Activated naive CD8-positive, alpha-beta T cell treated with anti-CD3 and anti-CD28 coated beads, Interleukin-2, amount 10 ng/mL, durations not matched to agents 7 days and 5 days (primary cell): ENCODE measurements at regions of chr15 and their contacts with region 1.

Region 1: DNA sequence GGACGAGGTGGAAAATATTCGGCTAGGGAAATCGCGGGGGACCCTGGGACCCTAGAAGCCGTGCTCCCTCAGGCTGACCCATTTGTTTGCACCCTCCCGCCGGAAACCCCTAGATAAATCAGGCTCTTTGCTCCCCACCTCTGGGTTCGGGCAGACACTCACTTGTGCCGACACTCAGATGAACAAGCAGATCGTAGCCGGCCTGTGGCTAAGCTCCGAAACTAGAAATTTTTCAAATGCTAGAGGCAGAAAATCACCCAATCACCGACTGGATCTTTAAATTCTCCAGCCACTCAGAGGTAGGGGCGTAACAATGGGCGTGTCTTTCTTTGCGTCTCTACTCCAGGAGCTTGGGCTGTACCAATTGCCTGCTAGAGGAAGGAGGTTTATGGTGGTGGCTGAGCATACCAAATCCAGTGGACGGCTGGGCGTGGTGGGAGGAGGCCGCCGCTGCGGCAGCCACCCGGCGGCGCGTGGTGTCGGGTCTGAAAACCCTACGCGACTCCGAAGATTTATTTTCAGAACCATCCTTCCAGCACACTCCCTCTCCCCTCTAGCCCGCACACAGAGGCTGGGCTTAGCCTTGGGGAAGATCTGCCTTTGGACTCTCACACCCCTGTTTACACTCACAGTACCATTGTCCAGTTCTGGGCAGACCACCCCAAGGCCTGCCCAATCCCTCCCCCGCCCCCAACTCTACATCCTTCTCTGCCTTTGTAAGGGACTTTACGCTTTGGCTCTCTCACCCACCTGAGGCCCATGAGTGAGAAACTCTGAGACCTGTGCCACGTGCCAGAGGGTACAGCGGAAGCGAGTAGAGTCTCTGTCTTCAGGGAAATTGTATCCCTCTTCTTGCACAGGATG is at the start of gene PIF1:
- DNase-seq: peak; percentile 80
- ATAC-seq: peak; percentile 92
- H3K4me3 Mint-ChIP-seq: peak within 1 kb of the TSS; percentile 97
- H3K27ac Mint-ChIP-seq: peak within 1 kb of the TSS; percentile 93
- H3K4me1 Mint-ChIP-seq: peaks cover 29% of the 10 kb centered on the region
- H3K27me3 Mint-ChIP-seq: no peaks in the 10 kb centered on the region
- total RNA-seq, gene PIF1: 45.8 to 49.7 TPM

Region 2: DNA sequence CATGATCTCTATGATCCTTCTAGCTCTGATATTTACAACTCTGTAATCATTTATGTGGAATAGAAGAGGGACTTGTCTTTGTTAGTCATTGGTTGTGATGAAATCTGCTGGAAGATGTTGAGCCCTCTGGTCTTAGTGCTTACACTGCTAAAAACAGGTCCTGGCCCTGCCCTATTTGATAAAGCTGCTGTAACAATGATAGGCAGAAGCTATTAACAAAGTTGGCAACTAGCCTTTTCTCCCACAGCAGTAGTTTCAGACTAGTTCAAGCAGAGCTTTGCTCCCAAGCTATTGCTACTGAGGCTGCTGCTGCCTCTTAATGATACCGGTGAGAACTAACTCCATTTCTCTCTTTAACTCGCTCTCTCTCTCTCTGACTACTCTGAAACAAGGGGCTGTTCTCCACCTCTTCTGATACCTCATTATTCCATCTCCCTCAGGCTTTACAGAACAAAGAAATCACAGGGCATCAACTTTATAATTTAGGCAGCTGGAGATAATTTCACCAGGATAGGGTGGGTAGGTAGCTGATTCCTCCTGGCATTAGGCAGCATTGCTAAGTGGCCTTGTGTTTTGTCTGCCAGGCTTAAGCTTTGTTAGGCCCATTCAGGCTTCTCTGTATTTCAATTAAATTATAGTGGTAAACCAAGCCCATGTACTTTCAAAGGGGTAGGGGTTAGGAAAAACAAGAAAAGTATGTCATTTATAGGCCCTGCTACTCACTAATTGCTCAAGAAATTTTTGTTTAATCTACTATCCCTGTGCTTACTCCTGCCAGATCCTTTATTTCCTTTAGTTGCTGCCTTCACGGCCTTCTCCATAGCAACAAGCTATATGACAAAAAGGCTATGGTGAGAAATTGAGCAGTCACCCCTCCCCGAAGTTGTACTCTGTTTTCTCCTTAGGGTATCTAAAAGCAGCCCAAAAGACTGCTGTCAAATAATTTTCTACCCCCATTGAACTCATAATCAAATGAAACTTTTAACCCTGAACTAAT is 189.9 kb before region 1 on chr15:
- POLR2A ChIA-PET with region 1: no interaction called
- DNase-seq: no peak
- ATAC-seq: no peak
- H3K4me3 Mint-ChIP-seq: peak overlapping the region; percentile 62
- H3K27ac Mint-ChIP-seq: peak overlapping the region; percentile 80
- H3K4me1 Mint-ChIP-seq: peaks cover 59% of the 10 kb centered on the region
- H3K27me3 Mint-ChIP-seq: peaks cover 2% of the 10 kb centered on the region

Region 3: GRCh38 chr15:64651573-64652260 is 173.9 kb before region 1 on chr15:
- POLR2A ChIA-PET with region 1: no interaction called
- DNase-seq: no peak
- ATAC-seq: peak; percentile 92
- H3K4me3 Mint-ChIP-seq: peak overlapping the region; percentile 66
- H3K27ac Mint-ChIP-seq: peak overlapping the region; percentile 74
- H3K4me1 Mint-ChIP-seq: peaks cover 24% of the 10 kb centered on the region
- H3K27me3 Mint-ChIP-seq: no peaks in the 10 kb centered on the region

Region 4: DNA sequence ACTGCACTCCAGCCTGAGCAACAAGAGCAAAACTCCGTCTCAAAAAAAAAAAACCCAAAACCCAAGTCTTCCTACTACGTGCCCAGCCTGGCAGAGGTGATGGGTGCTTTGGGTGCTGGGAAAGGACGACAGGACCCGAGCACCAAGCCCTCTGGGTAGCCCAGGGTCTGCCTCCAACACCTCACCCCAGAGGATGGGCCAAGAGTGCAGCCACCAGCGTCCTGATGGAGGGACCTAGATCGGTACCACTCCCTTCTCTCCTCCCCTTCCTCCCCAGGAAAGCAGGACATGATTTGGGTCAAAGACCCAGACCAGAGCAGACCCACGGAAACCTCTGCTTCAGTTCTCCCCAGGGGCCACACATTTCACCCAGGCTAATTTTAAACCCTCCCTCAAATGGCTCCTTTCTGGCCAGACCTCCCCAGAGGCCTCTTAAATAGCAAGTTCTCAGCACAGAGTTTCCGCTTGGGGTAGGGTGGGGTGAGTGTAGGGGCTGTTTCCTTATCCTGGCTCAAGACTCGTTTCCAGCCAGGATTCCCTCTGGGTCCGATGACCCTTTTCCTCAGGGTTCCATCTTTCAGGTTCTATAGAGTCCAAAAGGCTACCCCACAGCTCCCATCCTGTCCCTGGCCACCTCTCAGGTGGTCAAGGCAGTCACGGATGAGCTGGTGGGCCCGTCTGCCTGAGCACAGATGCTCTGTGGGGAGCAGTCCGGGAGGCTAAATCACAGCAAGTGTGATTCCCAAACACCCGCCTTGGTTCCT is 70.8 kb before region 1 on chr15:
- POLR2A ChIA-PET with region 1: no interaction called
- DNase-seq: no peak
- ATAC-seq: no peak
- H3K4me3 Mint-ChIP-seq: no peak overlapping the region
- H3K27ac Mint-ChIP-seq: no peak overlapping the region
- H3K4me1 Mint-ChIP-seq: no peaks in the 10 kb centered on the region
- H3K27me3 Mint-ChIP-seq: peaks cover 11% of the 10 kb centered on the region

Region 5: DNA sequence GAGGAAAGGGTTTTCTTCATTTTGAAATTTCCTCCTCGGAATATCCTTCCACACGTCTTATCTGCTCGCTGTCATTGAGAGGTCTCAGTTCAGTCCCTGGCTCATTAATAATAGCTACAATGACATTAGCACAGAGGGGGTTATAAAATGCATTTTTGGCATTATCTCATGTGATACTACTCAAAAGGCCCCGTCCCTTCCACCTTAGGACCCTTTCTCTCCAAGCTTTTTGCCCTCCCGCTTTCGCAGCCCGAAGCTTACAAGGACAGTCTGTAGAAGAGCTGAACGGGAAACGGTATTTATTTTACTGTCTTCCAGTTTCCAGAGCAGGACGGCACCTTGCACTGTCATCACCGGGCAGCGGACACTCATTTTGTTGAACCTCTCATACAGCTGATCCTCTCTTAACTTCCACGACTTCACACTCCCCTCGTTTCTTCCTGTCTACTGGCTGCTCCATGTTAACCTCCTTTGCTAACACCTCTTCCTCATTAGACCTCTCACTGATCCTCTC is 10.4 kb after region 1 on chr15:
- POLR2A ChIA-PET with region 1: interaction called, 52 read pairs
- DNase-seq: no peak
- ATAC-seq: peak; percentile 7
- H3K4me3 Mint-ChIP-seq: peak overlapping the region; percentile 67
- H3K27ac Mint-ChIP-seq: peak overlapping the region; percentile 74
- H3K4me1 Mint-ChIP-seq: peaks cover 37% of the 10 kb centered on the region
- H3K27me3 Mint-ChIP-seq: no peaks in the 10 kb centered on the region

Region 6: GRCh38 chr15:64841258-64842095 is 15.8 kb after region 1 on chr15 and contains the start of gene PLEKHO2:
- POLR2A ChIA-PET with region 1: interaction called, 52 read pairs
- DNase-seq: peak; percentile 90
- ATAC-seq: peak; percentile 78
- H3K4me3 Mint-ChIP-seq: peak within 1 kb of the TSS; percentile 94
- H3K27ac Mint-ChIP-seq: peak within 1 kb of the TSS; percentile 89
- H3K4me1 Mint-ChIP-seq: peaks cover 57% of the 10 kb centered on the region
- H3K27me3 Mint-ChIP-seq: no peaks in the 10 kb centered on the region
- total RNA-seq, gene PLEKHO2: 25.4 to 25.7 TPM